Transverse colon (tissue), 4 donors: ENCODE measurements at regions of chr5 and their contacts with region 1.

Region 1: GRCh38 chr5:129767906-129768380 is 20.0 kb downstream of the MINAR2 start:
- DNase-seq: peak; percentile 68
- H3K4me3 ChIP-seq: no peak overlapping the region
- H3K27ac ChIP-seq: no peak overlapping the region
- H3K4me1 ChIP-seq: peaks cover 0 to 3% (median 0%) of the 10 kb centered on the region in 4 donors
- H3K27me3 ChIP-seq: no peaks in the 10 kb centered on the region
- CTCF ChIP-seq: peak; percentile 93 to 97 (median 96)
- EP300 ChIP-seq: no peak
- POLR2A ChIP-seq: no peak

Region 2: GRCh38 chr5:127959152-127959764 is 1808.7 kb before region 1 on chr5:
- in situ Hi-C with region 1: no loop called
- intact Hi-C with region 1: no loop called
- DNase-seq: peak; percentile 83
- H3K4me3 ChIP-seq: no peak overlapping the region
- H3K27ac ChIP-seq: peak overlapping the region; percentile 76 to 83 (median 81)
- H3K4me1 ChIP-seq: peaks cover 30 to 56% (median 44%) of the 10 kb centered on the region in 4 donors
- H3K27me3 ChIP-seq: no peaks in the 10 kb centered on the region
- CTCF ChIP-seq: no peak
- EP300 ChIP-seq: no peak
- POLR2A ChIP-seq: no peak

Region 3: GRCh38 chr5:128384068-128384467 is 1383.9 kb before region 1 on chr5:
- in situ Hi-C with region 1: no loop called
- intact Hi-C with region 1: no loop called
- DNase-seq: no peak
- H3K4me3 ChIP-seq: no peak overlapping the region
- H3K27ac ChIP-seq: no peak overlapping the region
- H3K4me1 ChIP-seq: no peaks in the 10 kb centered on the region
- H3K27me3 ChIP-seq: no peaks in the 10 kb centered on the region
- CTCF ChIP-seq: no peak
- EP300 ChIP-seq: no peak
- POLR2A ChIP-seq: no peak

Region 4: DNA sequence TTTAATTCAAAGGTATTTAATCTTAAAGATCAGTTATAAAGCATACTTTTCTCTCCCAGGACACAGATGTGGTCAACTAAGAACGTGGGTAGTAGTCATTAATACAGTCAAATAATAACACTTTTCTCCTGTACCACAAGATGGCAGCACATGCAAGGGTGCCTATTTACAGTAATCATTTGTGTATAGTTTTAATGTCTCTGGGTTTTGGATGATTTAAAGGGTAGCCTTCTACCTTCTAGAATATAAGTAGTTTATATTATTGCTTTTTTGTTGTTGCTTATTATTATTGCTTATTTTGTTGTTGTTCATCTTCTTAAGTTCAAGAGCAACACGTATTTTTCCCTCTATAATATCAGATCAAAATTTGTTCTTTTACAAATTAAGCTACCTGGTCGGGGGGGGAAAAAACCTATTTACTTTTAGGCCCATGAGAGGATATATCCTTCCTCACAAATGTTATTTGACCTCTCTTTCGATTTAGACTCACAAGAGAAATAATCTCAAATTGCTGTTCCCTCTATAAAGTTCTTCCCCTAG is 862.3 kb before region 1 on chr5:
- in situ Hi-C with region 1: loop called in 3 of 4 experiments (anchors 25 kb)
- intact Hi-C with region 1: loop called (anchors 10 kb)
- DNase-seq: peak; percentile 9
- H3K4me3 ChIP-seq: no peak overlapping the region
- H3K27ac ChIP-seq: no peak overlapping the region
- H3K4me1 ChIP-seq: no peaks in the 10 kb centered on the region
- H3K27me3 ChIP-seq: no peaks in the 10 kb centered on the region
- CTCF ChIP-seq: peak; percentile 56 to 74 (median 69)
- EP300 ChIP-seq: no peak
- POLR2A ChIP-seq: no peak